ENCODE measurements at regions of chr2 and their contacts with region 1.

Region 1: DNA sequence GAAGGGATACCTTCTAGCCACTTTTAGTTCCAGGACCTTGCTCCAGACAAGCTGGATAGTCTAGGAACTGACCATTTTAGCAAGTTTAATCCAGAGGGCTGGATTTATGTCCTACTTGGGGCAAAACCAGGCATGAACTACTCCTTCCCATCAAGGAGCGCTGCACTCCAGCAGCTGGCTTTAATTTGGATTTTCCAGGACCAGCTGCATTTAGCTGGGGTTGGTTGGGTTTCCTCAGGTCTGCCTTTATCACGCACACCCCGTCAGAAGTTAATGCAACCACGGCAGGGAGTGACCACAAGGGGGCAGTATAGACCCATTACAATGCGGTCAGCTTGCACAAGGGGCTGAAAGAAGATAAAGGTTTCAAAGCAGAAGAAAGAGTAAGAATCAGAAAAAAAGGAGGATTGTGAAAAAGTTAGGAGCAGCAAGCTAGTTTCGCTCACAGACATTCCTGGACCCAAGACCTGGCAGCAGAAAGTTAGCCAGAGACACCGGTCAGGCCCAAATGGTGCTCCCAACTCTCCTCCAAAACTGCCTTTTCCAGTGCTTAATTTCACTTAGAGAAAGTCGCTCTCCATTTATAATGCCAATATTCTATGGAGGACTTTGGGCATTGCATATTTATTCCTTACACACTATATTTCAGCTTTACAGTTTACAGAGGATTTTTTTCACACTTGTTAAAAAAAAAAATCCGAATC is 40.1 kb downstream of the SLC4A1AP start:
- DNase-seq: peak; percentile 84
- H3K27ac ChIP-seq: peak overlapping the region; percentile 67
- CTCF ChIP-seq: peak; percentile 91

Region 2: GRCh38 chr2:27690052-27690451 is 13.7 kb before region 1 on chr2:
- CTCF ChIA-PET with region 1: interaction called, 10 read pairs
- POLR2A ChIA-PET with region 1: no interaction called
- DNase-seq: no peak
- H3K27ac ChIP-seq: no peak overlapping the region
- CTCF ChIP-seq: no peak

Region 3: DNA sequence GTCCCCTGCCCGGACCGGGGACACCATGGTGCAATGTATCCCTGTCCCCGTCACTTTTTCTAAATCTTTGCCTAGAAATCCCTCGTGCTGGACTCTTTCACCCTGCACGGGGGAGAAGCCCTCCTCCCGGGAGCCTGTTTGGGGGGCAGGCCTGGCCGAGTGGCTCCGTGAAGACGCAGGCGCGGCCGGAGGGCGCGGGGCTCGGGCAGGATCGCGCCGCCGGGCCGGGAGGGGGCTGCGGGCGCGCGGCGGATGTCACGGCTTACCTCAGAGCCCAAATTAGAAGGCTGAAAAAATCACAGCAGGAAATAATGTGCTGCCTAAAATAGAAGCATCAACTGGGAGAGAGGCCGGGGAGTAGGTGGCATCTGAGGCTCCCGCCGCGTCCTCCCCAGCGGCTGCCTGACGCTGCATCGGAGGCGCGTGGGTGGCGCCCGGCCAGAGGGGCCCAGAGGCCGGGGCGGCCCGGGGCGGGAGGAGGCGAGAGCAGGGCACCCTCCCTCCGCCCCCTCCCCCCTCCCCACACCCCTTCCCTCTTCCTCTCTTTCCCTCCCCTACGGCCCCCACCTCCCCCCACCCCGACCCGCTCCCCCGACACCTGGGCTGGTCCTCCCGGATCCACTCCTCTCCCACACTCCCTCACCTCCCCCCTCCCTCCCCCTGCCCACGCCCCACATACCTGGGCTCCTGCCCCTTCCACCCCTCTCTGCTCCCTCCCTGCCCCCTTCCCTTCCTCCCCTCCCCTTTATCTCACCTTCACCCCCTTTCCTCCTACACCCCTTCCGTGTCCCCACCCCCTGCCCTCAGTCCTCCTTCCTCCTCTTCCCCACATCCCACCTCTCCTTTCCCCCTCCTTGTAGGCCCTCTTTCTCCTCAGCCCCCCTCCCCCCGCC is 11.8 kb after region 1 on chr2:
- CTCF ChIA-PET with region 1: interaction called, 12 read pairs
- POLR2A ChIA-PET with region 1: no interaction called
- DNase-seq: no peak
- H3K27ac ChIP-seq: peak overlapping the region; percentile 58
- CTCF ChIP-seq: no peak

Region 4: GRCh38 chr2:27752551-27753237 is 48.9 kb after region 1 on chr2:
- CTCF ChIA-PET with region 1: interaction called, 11 read pairs
- POLR2A ChIA-PET with region 1: no interaction called
- DNase-seq: no peak
- H3K27ac ChIP-seq: peak overlapping the region; percentile 59
- CTCF ChIP-seq: no peak

Region 5: GRCh38 chr2:28406276-28407096 is 702.7 kb after region 1 on chr2:
- CTCF ChIA-PET with region 1: no interaction called
- POLR2A ChIA-PET with region 1: interaction called, 10 read pairs
- DNase-seq: no peak
- H3K27ac ChIP-seq: peak overlapping the region; percentile 93
- CTCF ChIP-seq: no peak

Measured in RWPE1 (cell line).